Natural killer cell (primary cell): ENCODE measurements at regions of chr4 and their contacts with region 1.

Region 1: GRCh38 chr4:98446499-98447375 is 185.6 kb downstream of the RAP1GDS1 start:
- DNase-seq: peak; percentile 63 to 80
- ATAC-seq: peak; percentile 79 to 90 (median 88)
- H3K4me3 ChIP-seq: peak overlapping the region; percentile 4
- H3K4me3 Mint-ChIP-seq: peak overlapping the region; percentile 75
- H3K27ac ChIP-seq: peak overlapping the region; percentile 71
- H3K27ac Mint-ChIP-seq: peak overlapping the region; percentile 89 to 91
- H3K4me1 ChIP-seq: peaks cover 42% of the 10 kb centered on the region
- H3K4me1 Mint-ChIP-seq: peaks cover 36 to 51% of the 10 kb centered on the region in 2 donors
- H3K27me3 ChIP-seq: no peaks in the 10 kb centered on the region
- H3K27me3 Mint-ChIP-seq: no peaks in the 10 kb centered on the region
- CTCF ChIP-seq: no peak

Region 2: DNA sequence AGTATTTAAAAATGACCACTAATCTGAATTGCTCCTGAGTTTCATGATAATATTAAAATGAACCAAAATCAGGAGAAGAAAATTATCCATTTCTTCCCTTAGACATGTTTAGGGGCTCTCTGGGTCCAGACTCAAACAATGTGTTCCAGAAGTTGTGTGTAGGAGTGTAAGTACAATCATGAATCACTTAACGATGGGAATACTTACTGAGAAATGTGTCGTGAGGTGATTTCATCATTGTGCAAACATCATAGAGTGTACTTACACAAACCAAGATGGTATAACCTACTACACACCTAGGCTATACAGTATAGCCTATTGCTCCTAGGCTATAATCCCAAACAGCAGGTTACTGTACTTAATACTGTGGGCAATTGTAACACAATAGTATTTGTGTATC is 378.2 kb before region 1 on chr4:
- intact Hi-C with region 1: no loop called
- DNase-seq: no peak
- ATAC-seq: no peak
- H3K4me3 ChIP-seq: no peak overlapping the region
- H3K4me3 Mint-ChIP-seq: no peak overlapping the region
- H3K27ac ChIP-seq: no peak overlapping the region
- H3K27ac Mint-ChIP-seq: no peak overlapping the region
- H3K4me1 ChIP-seq: no peaks in the 10 kb centered on the region
- H3K4me1 Mint-ChIP-seq: no peaks in the 10 kb centered on the region
- H3K27me3 ChIP-seq: no peaks in the 10 kb centered on the region
- H3K27me3 Mint-ChIP-seq: no peaks in the 10 kb centered on the region
- CTCF ChIP-seq: no peak

Region 3: DNA sequence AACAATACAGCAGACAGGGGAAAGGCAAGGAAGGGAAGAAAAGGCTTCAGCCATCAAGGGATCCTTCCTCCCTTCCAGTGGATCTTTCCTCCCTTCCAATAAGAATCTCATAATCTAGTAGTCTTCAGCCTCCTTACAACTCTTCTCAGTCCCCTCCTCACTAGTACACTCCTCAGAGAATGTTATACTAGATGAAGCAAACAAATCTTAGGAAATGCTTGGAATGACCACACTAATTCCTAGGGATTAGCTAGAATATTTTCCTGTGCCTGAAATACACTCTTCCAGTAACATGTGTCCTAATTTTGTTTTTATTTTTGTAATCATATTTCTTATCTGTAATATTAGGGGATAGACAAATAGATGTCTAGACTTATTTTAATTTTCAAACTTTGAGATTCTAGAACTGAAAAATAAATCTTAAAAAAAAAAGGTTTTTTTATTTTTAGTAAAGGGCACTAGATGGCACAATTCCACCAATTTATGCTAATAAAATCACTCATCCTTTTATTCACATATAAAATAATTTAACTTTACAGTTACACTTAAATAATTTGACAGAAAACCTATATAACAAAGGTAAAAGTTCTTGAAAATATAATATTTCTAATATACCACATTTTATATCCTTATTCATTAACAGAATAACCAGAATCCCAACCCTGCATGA is 296.5 kb before region 1 on chr4:
- intact Hi-C with region 1: loop called (anchors 5 kb)
- DNase-seq: peak in 1 of 2 donors; percentile 33
- ATAC-seq: no peak
- H3K4me3 ChIP-seq: no peak overlapping the region
- H3K4me3 Mint-ChIP-seq: no peak overlapping the region
- H3K27ac ChIP-seq: no peak overlapping the region
- H3K27ac Mint-ChIP-seq: no peak overlapping the region
- H3K4me1 ChIP-seq: no peaks in the 10 kb centered on the region
- H3K4me1 Mint-ChIP-seq: peaks cover 0 to 9% of the 10 kb centered on the region in 2 donors
- H3K27me3 ChIP-seq: no peaks in the 10 kb centered on the region
- H3K27me3 Mint-ChIP-seq: no peaks in the 10 kb centered on the region
- CTCF ChIP-seq: peak; percentile 51

Region 4: DNA sequence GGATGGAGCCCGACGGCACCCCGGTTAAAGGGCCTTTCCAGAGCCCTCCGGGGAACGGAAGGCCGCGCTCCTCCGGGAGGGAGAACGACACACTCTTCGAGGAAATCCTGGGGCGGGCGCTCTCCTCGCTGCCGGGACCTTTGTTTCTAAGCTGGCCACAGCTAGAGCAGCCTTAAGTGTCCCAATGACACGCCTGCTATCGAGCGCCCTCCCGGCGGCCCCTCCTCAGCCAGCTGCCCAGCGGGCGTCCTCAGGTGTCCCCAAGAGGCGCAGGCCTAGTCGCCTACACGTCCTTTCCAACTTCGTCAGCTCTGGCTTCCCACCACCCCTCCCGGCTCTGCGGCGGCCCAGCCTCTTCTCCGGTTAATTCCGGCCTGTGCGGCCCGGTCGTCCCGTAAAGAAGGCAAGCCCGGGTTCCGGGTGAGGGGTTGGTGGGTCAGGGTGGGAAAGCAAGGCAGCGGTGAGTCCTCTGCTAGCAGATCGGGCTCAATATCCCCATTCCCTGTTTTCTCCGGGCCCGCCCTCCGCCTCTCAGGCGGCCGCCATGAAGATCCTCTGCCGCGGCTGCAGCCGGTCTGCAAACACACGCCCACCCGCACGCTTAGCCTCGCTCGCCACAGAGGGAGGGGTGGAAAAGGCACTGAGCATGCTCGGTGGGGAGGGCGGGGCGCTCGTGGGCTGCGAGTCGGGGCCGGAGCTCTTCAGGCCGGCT is 186.0 kb before region 1 on chr4:
- intact Hi-C with region 1: loop called (anchors 2 kb)
- DNase-seq: peak; percentile 78 to 94
- ATAC-seq: peak; percentile 80 to 90 (median 84)
- H3K4me3 ChIP-seq: peak overlapping the region; percentile 96
- H3K4me3 Mint-ChIP-seq: peak overlapping the region; percentile 91
- H3K27ac ChIP-seq: peak overlapping the region; percentile 73
- H3K27ac Mint-ChIP-seq: peak overlapping the region; percentile 70 to 93
- H3K4me1 ChIP-seq: peaks cover 15% of the 10 kb centered on the region
- H3K4me1 Mint-ChIP-seq: peaks cover 43 to 46% of the 10 kb centered on the region in 2 donors
- H3K27me3 ChIP-seq: no peaks in the 10 kb centered on the region
- H3K27me3 Mint-ChIP-seq: no peaks in the 10 kb centered on the region
- CTCF ChIP-seq: no peak

Region 5: DNA sequence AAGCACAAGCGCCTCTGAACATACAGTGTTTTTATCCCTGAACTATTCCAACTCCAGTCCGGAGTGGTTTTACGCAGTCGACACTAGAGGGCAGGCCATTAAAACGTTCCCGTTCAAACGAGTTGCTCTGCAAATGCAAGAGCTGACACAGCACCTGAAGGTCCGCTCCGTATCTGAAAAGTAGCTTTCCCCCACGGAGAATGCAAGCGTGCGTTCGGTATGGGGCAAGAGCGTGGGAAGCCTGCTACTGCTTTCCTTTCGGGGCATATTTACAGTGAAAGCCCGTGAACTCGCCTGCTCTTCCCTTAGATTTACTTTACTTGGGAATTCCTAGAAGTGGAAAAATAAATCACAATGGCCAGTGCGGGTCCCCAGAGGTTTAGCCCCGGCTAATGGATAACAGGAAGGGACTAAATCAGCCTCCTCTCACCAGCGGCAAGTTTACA is 20.9 kb after region 1 on chr4:
- intact Hi-C with region 1: loop called (anchors 2 kb)
- DNase-seq: peak; percentile 30 to 85
- ATAC-seq: peak; percentile 79 to 95 (median 93)
- H3K4me3 ChIP-seq: no peak overlapping the region
- H3K4me3 Mint-ChIP-seq: peak overlapping the region; percentile 86
- H3K27ac ChIP-seq: no peak overlapping the region
- H3K27ac Mint-ChIP-seq: peak overlapping the region in 1 of 2 donors; percentile 74
- H3K4me1 ChIP-seq: peaks cover 21% of the 10 kb centered on the region
- H3K4me1 Mint-ChIP-seq: peaks cover 39% of the 10 kb centered on the region in 2 donors
- H3K27me3 ChIP-seq: no peaks in the 10 kb centered on the region
- H3K27me3 Mint-ChIP-seq: no peaks in the 10 kb centered on the region
- CTCF ChIP-seq: peak; percentile 73

Region 6: DNA sequence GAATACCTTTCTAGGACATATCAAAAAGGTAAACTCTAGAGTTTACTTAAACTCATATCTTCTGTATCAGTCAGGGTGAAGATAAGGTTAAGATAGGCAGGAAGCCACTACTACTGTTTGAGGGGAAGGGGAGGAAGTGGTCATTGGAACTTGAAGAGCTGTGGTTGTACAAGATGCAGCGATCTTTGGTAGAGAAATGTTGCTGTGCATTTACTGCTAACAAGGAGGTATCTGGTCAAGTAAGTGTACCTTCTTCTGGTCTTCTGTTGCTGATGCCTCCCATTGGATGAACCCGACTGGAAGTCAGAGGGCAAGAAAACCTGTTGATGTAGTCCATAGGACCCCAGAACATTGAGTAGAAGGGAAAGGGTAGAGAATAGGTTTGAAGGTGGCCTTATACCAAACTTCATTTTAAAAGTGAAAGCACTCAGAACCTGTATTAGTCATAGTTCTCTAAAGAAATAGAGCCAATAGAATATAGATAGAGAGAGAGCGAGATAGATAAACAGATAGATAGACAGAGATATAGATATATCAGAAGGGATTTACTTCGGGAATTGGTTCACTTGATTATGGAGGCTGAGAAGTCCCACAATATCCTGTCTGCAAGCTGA is 259.6 kb after region 1 on chr4:
- intact Hi-C with region 1: loop called (anchors 5 kb)
- DNase-seq: peak; percentile 34 to 74
- ATAC-seq: peak; percentile 90 to 98 (median 90)
- H3K4me3 ChIP-seq: peak overlapping the region; percentile 14
- H3K4me3 Mint-ChIP-seq: peak overlapping the region; percentile 94
- H3K27ac ChIP-seq: peak overlapping the region; percentile 67
- H3K27ac Mint-ChIP-seq: peak overlapping the region; percentile 94 to 95
- H3K4me1 ChIP-seq: peaks cover 21% of the 10 kb centered on the region
- H3K4me1 Mint-ChIP-seq: peaks cover 44 to 55% of the 10 kb centered on the region in 2 donors
- H3K27me3 ChIP-seq: no peaks in the 10 kb centered on the region
- H3K27me3 Mint-ChIP-seq: peaks cover 0 to 2% of the 10 kb centered on the region in 2 donors
- CTCF ChIP-seq: no peak

Region 7: DNA sequence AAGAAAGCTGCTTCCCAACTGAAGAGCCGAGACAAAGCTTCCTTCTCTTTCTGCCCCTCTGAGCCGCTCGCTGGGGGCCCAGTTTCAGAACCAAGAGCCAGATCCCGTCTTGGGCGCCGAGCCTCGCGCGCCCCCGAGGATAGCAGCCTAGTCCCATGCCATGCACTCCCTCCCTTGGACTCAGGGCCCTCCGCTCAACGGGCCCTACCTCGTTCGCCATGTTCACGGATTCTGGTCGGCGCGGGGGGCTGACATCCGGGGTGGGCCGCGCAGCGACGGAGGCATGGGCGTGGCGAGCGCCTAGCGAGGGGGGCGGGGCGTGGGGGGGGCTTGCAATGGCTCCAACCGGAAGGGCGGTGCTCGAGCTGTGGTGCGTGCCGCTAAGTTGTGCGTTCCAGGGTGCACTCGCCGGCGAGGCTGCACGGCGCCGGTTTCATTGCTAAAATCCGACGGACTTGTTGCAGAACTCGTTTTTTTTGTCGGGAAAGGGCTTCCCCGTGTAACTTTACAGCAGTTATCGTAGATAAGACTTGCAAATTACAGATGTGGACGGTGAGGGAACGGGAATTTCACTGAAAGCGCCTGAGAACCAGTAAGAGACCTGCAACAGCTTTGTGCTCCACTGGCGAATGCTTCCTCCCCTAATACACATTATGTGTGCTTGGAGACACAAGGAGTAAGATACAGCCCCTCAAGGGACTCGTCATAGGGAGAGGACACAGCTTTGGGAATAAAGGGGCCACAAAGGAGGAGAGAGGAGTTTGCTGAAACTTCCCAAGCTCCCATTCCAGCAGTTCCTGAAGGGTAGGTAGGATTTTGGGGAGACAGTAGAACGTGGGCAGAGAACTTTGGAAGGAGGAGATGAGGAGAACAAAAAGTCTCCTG is 642.0 kb after region 1 on chr4 and contains the start of gene ADH5:
- intact Hi-C with region 1: loop called (anchors 2 kb)
- DNase-seq: peak; percentile 78 to 94
- ATAC-seq: peak; percentile 92 to 98 (median 93)
- H3K4me3 ChIP-seq: peak within 1 kb of the TSS; percentile 74
- H3K4me3 Mint-ChIP-seq: peak within 1 kb of the TSS; percentile 98
- H3K27ac ChIP-seq: peak within 1 kb of the TSS; percentile 89
- H3K27ac Mint-ChIP-seq: peak within 1 kb of the TSS; percentile 96 to 99
- H3K4me1 ChIP-seq: peaks cover 19% of the 10 kb centered on the region
- H3K4me1 Mint-ChIP-seq: peaks cover 59 to 66% of the 10 kb centered on the region in 2 donors
- H3K27me3 ChIP-seq: no peaks in the 10 kb centered on the region
- H3K27me3 Mint-ChIP-seq: no peaks in the 10 kb centered on the region
- CTCF ChIP-seq: no peak
- total RNA-seq, gene ADH5: 54.3 to 80.4 (median 62.5) TPM